ENCODE measurements at regions of chr15 and their contacts with region 1.

Region 1: DNA sequence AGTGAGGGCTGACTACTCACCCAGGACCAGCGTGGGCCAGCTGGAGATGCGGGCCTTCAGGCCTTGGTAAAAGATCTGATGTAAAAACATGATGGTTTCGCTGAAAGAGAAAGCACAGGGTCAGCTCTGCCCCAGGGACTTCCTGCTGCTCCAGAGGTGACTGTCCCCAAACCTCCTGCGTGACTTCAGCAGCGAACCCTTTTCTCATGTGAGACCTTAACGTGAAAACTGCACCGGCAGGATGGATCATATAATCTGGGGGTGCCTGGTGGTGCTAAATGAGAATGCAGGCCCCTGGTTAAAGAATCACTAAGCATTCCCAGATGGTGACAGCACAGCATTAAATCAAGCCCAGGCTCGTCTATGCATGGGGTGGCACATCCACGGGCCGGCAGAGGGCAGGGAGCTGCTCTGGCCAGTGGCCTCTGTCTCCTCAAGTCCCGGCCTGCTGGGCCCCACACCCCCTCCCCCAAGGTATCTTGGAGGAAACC is 55.4 kb downstream of the RASGRF1 start:
- DNase-seq: no peak
- H3K4me3 ChIP-seq: no peak overlapping the region
- H3K27ac ChIP-seq: no peak overlapping the region
- H3K4me1 ChIP-seq: no peaks in the 10 kb centered on the region
- H3K27me3 ChIP-seq: no peaks in the 10 kb centered on the region
- CTCF ChIP-seq: no peak
- EP300 ChIP-seq: no peak
- POLR2A ChIP-seq: no peak

Region 2: GRCh38 chr15:79192462-79193036 is 157.4 kb after region 1 on chr15:
- intact Hi-C with region 1: loop called in 2 of 4 experiments (anchors 10 kb)
- DNase-seq: no peak
- H3K4me3 ChIP-seq: no peak overlapping the region
- H3K27ac ChIP-seq: no peak overlapping the region
- H3K4me1 ChIP-seq: no peaks in the 10 kb centered on the region
- H3K27me3 ChIP-seq: no peaks in the 10 kb centered on the region
- CTCF ChIP-seq: no peak
- EP300 ChIP-seq: no peak
- POLR2A ChIP-seq: no peak

Measured in ovary (tissue), 10 donors.